ENCODE measurements at regions of chr13 and their contacts with region 1.

Region 1: DNA sequence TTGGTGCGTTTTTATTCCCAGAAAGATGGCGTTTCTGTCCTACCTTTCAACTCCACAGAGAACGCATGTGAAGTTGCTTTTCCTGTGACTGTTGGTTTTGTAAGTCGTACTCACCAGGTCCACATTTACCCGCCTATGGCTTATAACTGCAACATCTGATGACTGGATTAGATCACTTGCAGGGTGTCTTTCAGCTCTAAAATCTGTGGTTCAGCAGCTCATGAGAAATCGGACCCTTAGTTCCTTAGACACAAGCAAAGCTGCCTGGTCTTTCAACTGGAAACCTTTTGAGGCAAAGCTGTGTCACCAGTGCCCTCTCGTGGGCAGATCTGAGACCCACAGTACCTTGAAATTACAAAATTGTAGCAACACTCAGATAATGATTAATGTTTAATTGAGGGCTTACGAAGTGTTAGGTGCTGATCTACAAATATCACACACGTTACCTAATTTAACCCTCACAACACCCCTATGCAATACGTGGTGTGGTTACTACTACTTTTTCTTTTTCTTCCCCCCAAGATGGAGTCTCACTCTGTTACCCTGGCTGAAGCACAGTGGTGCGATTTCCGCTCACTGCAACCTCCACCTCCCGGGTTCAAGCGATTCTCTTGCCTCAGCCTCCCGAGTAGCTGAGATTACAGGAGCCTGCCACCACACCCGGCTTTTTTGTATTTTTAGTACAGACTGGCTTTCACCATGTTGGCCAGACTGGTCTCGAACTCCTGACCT is 65.4 kb downstream of the RUBCNL start:
- DNase-seq: no peak
- ATAC-seq: peak; percentile 81
- H3K4me3 Mint-ChIP-seq: no peak overlapping the region
- H3K27ac Mint-ChIP-seq: no peak overlapping the region
- H3K4me1 Mint-ChIP-seq: peaks cover 15% of the 10 kb centered on the region
- H3K27me3 Mint-ChIP-seq: no peaks in the 10 kb centered on the region
- CTCF ChIP-seq: peak; percentile 75

Region 2: DNA sequence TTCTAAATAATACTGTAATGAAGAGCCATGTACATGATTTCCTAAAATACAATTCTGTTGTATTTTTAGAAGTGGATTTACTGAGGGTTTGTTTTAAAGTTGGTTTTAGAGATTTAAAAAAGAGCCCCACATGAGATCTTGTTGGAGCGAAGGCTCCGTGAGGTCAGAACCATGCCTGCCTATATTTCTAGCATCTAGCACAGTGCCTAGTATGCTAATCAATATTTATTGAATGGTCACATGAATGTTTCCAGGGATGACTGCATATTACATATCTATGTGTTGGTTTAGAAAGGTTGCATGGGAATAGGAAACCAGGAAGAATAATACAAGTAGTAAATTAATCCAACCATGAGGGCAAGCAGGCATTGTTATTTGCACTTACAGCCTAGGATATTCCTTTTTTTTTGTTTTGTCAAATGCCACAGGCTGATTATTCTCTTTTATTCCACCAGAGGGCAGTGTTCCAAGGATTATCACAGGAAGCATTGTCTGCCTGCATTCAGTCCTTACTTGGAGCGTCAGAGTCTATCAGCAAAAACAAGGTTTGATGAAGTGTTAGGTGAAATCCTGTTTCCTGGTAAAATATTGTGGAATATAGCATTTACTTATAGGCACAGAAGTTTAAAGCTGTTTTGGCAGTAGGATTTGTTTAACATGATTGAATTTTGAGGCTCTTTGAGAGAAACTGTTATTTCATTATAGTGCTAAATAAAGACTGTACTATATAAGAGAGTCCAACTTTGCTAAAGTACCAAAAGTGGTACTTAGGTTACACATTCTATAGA is 810.2 kb before region 1 on chr13:
- CTCF ChIA-PET with region 1: interaction called, 5 read pairs
- POLR2A ChIA-PET with region 1: no interaction called
- intact Hi-C with region 1: loop called (anchors 1 kb)
- DNase-seq: no peak
- ATAC-seq: peak; percentile 58
- H3K4me3 Mint-ChIP-seq: no peak overlapping the region
- H3K27ac Mint-ChIP-seq: no peak overlapping the region
- H3K4me1 Mint-ChIP-seq: peaks cover 8% of the 10 kb centered on the region
- H3K27me3 Mint-ChIP-seq: no peaks in the 10 kb centered on the region
- CTCF ChIP-seq: peak; percentile 83

Region 3: GRCh38 chr13:45623515-45624090 is 698.1 kb before region 1 on chr13:
- CTCF ChIA-PET with region 1: interaction called, 11 read pairs
- POLR2A ChIA-PET with region 1: no interaction called
- intact Hi-C with region 1: no loop called
- DNase-seq: no peak
- ATAC-seq: no peak
- H3K4me3 Mint-ChIP-seq: no peak overlapping the region
- H3K27ac Mint-ChIP-seq: no peak overlapping the region
- H3K4me1 Mint-ChIP-seq: no peaks in the 10 kb centered on the region
- H3K27me3 Mint-ChIP-seq: peaks cover 32% of the 10 kb centered on the region
- CTCF ChIP-seq: no peak

Region 4: GRCh38 chr13:45807520-45808099 is 514.0 kb before region 1 on chr13:
- CTCF ChIA-PET with region 1: interaction called, 10 read pairs
- POLR2A ChIA-PET with region 1: no interaction called
- intact Hi-C with region 1: loop called (anchors 1 kb)
- DNase-seq: no peak
- ATAC-seq: no peak
- H3K4me3 Mint-ChIP-seq: no peak overlapping the region
- H3K27ac Mint-ChIP-seq: no peak overlapping the region
- H3K4me1 Mint-ChIP-seq: no peaks in the 10 kb centered on the region
- H3K27me3 Mint-ChIP-seq: no peaks in the 10 kb centered on the region
- CTCF ChIP-seq: no peak

Region 5: DNA sequence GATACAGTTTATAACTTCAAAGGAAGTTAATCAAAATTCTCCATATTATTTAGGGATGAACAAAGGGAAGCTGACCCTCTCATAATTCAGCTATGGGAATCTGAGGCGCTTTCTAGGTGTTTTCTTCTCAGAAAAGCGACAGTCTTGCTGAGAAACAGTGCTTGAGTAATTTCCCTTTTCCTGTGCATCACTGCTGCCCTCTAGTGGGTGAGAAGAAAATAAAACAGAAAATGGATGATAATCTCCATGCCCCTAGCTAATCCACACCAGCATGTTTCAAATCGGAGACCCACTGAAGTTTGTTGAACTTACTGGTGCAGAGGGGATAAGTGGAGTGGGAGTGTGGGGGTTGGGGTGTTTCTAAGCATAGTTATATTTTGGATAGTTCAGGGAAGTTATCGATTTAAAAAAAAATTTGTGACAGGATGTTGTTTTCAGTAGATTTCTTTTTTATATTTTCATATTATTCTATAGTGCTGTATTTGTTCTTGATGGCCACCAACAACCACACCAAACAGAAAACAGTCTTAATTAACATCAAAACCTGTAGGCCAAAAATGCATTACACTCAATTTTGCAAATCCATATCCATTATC is 161.1 kb before region 1 on chr13:
- CTCF ChIA-PET with region 1: interaction called, 4 read pairs
- POLR2A ChIA-PET with region 1: no interaction called
- intact Hi-C with region 1: loop called (anchors 1 kb)
- DNase-seq: no peak
- ATAC-seq: peak; percentile 45
- H3K4me3 Mint-ChIP-seq: peak overlapping the region; percentile 70
- H3K27ac Mint-ChIP-seq: peak overlapping the region; percentile 88
- H3K4me1 Mint-ChIP-seq: peaks cover 61% of the 10 kb centered on the region
- H3K27me3 Mint-ChIP-seq: no peaks in the 10 kb centered on the region
- CTCF ChIP-seq: no peak

Region 6: GRCh38 chr13:46341112-46341711 is 19.6 kb after region 1 on chr13:
- CTCF ChIA-PET with region 1: interaction called, 4 read pairs
- POLR2A ChIA-PET with region 1: interaction called, 4 read pairs
- intact Hi-C with region 1: loop called (anchors 2 kb)
- DNase-seq: no peak
- ATAC-seq: peak; percentile 83
- H3K4me3 Mint-ChIP-seq: peak overlapping the region; percentile 63
- H3K27ac Mint-ChIP-seq: peak overlapping the region; percentile 91
- H3K4me1 Mint-ChIP-seq: peaks cover 66% of the 10 kb centered on the region
- H3K27me3 Mint-ChIP-seq: no peaks in the 10 kb centered on the region
- CTCF ChIP-seq: no peak

Region 7: GRCh38 chr13:46463719-46464118 is 142.1 kb after region 1 on chr13:
- CTCF ChIA-PET with region 1: no interaction called
- POLR2A ChIA-PET with region 1: no interaction called
- intact Hi-C with region 1: loop called (anchors 5 kb)
- DNase-seq: no peak
- ATAC-seq: no peak
- H3K4me3 Mint-ChIP-seq: no peak overlapping the region
- H3K27ac Mint-ChIP-seq: no peak overlapping the region
- H3K4me1 Mint-ChIP-seq: no peaks in the 10 kb centered on the region
- H3K27me3 Mint-ChIP-seq: no peaks in the 10 kb centered on the region
- CTCF ChIP-seq: no peak

Measured in activated B cell treated with CpG ODN at 0.5 μM for 24 hours (primary cell).